OCI-LY7 (cell line): ENCODE measurements at regions of chr2 and their contacts with region 1.

Region 1: GRCh38 chr2:165203689-165204559 is at the start of gene SCN3A:
- DNase-seq: peak; percentile 77
- H3K4me3 ChIP-seq: peak within 1 kb of the TSS; percentile 68
- H3K27ac ChIP-seq: peak within 1 kb of the TSS; percentile 63
- H3K4me1 ChIP-seq: peaks cover 28% of the 10 kb centered on the region
- CTCF ChIP-seq: peak; percentile 97
- total RNA-seq, gene SCN3A: 7.1 and 7.3 TPM in 2 replicates

Region 2: GRCh38 chr2:164757924-164758695 is 445.8 kb before region 1 on chr2:
- CTCF ChIA-PET with region 1: no interaction called
- POLR2A ChIA-PET with region 1: no interaction called
- intact Hi-C with region 1: loop called (anchors 5 kb)
- DNase-seq: peak; percentile 33
- H3K4me3 ChIP-seq: peak overlapping the region; percentile 36
- H3K27ac ChIP-seq: no peak overlapping the region
- H3K4me1 ChIP-seq: peaks cover 80% of the 10 kb centered on the region
- CTCF ChIP-seq: no peak

Region 3: GRCh38 chr2:164992818-164993217 is 211.1 kb before region 1 on chr2:
- CTCF ChIA-PET with region 1: no interaction called
- POLR2A ChIA-PET with region 1: interaction called, 12 read pairs
- intact Hi-C with region 1: loop called (anchors 1 kb)
- DNase-seq: peak; percentile 81
- H3K4me3 ChIP-seq: no peak overlapping the region
- H3K27ac ChIP-seq: no peak overlapping the region
- H3K4me1 ChIP-seq: peaks cover 15% of the 10 kb centered on the region
- CTCF ChIP-seq: peak; percentile 79

Region 4: DNA sequence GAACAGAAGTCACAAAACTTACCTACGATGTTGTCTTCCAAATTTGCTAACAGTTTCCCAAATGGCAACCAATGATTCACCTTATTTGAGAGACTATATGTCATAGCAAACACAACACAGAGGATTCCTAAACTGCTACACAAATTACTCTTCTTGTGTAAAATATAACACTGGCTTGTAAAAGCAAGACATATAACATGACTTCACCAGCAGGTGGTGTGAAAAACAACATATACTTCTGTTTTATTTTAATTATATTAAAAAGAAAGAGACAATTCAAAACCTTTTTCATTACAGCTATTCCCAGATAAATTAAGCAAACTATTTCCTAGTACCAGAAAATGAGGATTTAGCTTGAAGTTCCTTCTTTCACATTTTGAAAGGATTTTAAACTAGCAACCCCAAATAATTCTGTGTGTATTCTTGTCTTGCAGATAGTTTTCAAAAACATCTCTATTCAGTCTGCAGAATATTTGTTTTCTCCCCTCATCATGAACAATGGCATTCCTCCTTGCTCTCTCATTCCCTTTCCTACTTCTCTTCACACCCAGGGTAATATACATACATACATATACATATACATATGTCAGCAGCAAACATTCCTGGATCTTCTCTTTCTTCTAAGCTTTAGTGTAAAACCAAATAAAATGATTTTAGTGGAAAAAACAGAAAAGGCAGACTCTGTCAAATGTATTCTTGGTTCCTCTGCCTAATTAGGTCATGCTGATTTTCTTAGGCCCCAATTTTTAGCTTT is 62.1 kb before region 1 on chr2:
- CTCF ChIA-PET with region 1: no interaction called
- POLR2A ChIA-PET with region 1: no interaction called
- intact Hi-C with region 1: loop called (anchors 2 kb)
- DNase-seq: peak; percentile 24
- H3K4me3 ChIP-seq: no peak overlapping the region
- H3K27ac ChIP-seq: no peak overlapping the region
- H3K4me1 ChIP-seq: peaks cover 4% of the 10 kb centered on the region
- CTCF ChIP-seq: peak; percentile 71

Region 5: GRCh38 chr2:165440367-165440766 is 236.4 kb after region 1 on chr2:
- CTCF ChIA-PET with region 1: no interaction called
- POLR2A ChIA-PET with region 1: no interaction called
- intact Hi-C with region 1: no loop called
- DNase-seq: no peak
- H3K4me3 ChIP-seq: no peak overlapping the region
- H3K27ac ChIP-seq: no peak overlapping the region
- H3K4me1 ChIP-seq: no peaks in the 10 kb centered on the region
- CTCF ChIP-seq: no peak

Region 6: GRCh38 chr2:165505514-165505913 is 301.6 kb after region 1 on chr2:
- CTCF ChIA-PET with region 1: no interaction called
- POLR2A ChIA-PET with region 1: no interaction called
- intact Hi-C with region 1: no loop called
- DNase-seq: no peak
- H3K4me3 ChIP-seq: no peak overlapping the region
- H3K27ac ChIP-seq: no peak overlapping the region
- H3K4me1 ChIP-seq: no peaks in the 10 kb centered on the region
- CTCF ChIP-seq: no peak

Region 7: GRCh38 chr2:165815299-165816141 is 611.6 kb after region 1 on chr2:
- CTCF ChIA-PET with region 1: no interaction called
- POLR2A ChIA-PET with region 1: no interaction called
- intact Hi-C with region 1: loop called (anchors 5 kb)
- DNase-seq: peak; percentile 29
- H3K4me3 ChIP-seq: peak overlapping the region; percentile 28
- H3K27ac ChIP-seq: peak overlapping the region; percentile 70
- H3K4me1 ChIP-seq: peaks cover 47% of the 10 kb centered on the region
- CTCF ChIP-seq: no peak